Psoas muscle (tissue), 8 donors: ENCODE measurements at regions of chr12 and their contacts with region 1.

Region 1: DNA sequence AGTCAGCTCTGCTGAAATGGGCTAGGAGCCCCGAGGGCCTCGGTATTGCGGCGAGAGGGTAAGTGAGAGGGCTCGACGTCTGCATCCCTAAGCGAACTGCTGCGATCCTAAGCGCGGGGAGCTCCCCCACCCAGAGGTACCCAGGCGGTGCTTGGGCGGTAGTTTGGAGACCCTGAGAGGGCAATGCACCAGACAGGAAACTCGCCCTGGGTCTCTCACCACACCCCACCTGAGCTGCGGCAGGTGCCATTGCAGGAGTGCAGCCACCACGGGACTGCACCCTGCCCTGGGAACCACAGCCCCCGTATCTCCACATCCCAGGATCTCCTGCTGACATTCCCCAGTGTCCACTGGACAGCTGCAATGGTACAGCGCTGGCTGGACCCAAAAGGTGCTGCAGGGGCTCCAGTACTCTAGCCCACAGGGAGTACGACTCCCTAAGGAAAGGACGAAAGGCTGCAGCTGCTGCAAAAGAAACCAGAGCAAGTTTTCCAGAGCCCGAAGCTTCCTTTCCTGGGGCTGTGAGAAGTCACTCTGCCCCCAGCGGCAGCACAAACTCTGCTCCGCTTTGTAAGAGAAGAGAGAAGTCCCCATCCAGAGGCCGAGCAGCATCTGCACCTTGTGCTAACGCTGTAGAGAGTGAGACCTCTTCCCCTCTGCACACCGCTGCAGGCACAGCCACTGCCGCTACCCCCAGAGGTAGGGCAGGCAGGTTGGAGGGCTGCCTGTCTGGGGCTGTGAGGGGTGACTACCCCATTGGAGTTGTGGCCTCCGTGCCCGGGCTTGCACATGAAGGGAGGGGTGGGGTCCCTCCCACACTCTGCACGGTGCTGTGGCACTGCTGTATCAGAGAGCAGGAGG is 31.1 kb upstream of the MON2 start:
- DNase-seq: peak; percentile 27 to 52
- ATAC-seq: peak in 3 of 4 donors; percentile 53 to 73 (median 62)
- H3K4me3 ChIP-seq: peak overlapping the region; percentile 62
- H3K27ac ChIP-seq: no peak overlapping the region
- H3K4me1 ChIP-seq: no peaks in the 10 kb centered on the region
- H3K27me3 ChIP-seq: peaks cover 0 to 30% (median 4%) of the 10 kb centered on the region in 3 donors
- CTCF ChIP-seq: peak; percentile 25

Region 2: DNA sequence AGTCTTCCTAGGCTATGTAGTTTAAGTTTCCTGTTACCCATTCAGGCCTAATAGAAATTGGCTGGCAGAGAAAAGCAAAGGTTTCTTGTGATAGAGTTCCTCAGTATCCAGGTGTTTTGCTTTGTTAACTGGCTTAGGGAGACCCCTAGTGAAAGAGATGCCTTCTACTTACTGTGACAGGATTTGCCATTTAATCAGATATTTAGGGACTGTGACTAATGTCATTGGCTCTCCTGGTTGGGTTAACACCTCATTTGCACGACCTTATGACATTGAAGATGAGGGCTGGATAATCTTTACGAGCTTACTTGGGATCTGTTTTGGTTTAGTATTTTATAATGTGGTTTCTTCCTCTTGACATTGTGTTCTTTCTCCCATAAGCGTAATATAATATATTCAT is 36.9 kb after region 1 on chr12:
- intact Hi-C with region 1: loop called in 1 of 2 experiments (anchors 5 kb)
- DNase-seq: no peak
- ATAC-seq: peak; percentile 88 to 98 (median 93)
- H3K4me3 ChIP-seq: no peak overlapping the region
- H3K27ac ChIP-seq: peak overlapping the region; percentile 31
- H3K4me1 ChIP-seq: peaks cover 38% of the 10 kb centered on the region
- H3K27me3 ChIP-seq: no peaks in the 10 kb centered on the region
- CTCF ChIP-seq: peak; percentile 14

Region 3: DNA sequence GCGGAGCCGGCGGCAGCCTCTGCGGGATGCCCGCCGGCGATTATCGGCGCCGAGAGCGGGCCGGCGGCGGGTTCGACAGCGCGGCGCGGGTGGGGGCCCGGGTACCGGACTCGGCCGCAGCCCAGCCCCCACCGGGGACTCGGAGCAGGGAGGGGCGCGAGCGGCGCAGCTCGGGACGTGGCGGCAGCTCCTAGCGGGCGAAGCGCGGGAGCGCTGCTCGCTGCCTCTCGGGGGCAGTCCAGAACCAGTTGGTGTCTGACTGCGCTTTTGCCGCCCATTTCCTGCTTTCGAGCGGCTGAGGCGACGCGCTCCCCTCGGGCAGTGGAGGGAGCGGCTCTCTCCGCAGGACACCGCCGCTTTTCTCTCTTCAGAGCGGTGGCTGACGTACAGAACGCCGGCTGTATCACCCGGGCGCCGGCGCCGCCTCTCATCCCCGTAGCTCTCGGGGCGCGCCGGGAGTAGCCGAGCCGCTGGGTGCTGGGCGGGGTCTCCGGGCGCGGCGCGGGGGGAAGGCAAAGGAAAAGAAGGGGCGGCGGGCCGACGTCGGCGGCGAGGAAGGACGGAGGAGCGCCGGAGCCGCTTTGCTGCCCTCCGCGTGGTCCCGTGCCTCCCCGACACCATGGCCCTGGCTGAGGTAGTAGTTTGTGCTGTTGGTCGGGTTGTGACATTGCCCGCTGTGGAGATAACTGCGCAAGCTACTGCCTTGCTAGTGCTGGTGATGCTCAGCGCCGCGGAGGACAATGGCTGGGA is 167.7 kb after region 1 on chr12:
- intact Hi-C with region 1: no loop called
- DNase-seq: peak; percentile 88 to 95
- ATAC-seq: peak; percentile 92 to 94 (median 93)
- H3K4me3 ChIP-seq: peak overlapping the region; percentile 90
- H3K27ac ChIP-seq: peak overlapping the region; percentile 99
- H3K4me1 ChIP-seq: peaks cover 24% of the 10 kb centered on the region
- H3K27me3 ChIP-seq: no peaks in the 10 kb centered on the region
- CTCF ChIP-seq: peak; percentile 53